Body of pancreas (tissue), 4 donors: ENCODE measurements at regions of chr2 and their contacts with region 1.

Region 1: DNA sequence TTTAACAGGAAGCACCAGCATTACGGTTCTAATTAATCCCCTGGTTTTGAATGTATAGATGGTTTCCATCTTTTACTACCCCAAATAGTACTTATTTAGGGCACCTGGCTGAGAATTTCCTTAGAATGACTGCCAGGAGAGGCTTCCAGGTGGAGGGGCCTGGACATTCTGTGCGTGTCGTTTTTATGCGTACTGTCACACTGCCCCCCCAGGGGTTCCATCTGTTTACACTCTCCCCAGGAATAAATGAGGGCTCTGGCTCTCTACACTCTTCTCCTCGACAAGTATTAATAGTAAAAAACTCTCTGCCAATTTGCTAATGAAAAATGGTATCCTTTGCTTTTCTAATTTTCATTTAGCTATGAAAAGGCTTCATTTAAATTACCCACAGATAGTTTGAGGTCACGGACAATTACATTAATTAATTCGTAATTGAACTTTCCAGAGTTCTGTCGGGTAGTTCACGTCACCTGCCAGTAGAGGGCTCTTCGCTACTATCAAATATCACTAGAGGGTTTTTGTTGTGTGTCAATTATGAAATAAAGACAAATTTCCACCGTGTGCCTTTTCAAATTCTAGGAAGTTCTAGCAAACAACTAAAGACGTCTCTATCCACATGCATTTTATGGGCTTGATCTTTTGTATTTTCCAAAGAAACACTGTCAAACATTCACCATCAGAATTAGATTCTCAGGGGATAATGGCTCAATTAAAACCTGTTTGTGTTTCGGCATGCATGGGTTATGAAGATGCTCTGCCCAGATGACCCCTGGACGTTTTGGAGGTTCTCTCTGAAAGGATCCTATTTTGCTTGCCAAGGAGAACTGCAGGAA is 88.8 kb upstream of the ASB18 start:
- DNase-seq: peak in 2 of 4 donors; percentile 27 to 38
- ATAC-seq: peak; percentile 47
- H3K4me3 ChIP-seq: no peak overlapping the region
- H3K27ac ChIP-seq: no peak overlapping the region
- H3K4me1 ChIP-seq: no peaks in the 10 kb centered on the region
- H3K27me3 ChIP-seq: no peaks in the 10 kb centered on the region
- CTCF ChIP-seq: peak; percentile 35 to 93 (median 82)
- POLR2A ChIP-seq: no peak

Region 2: GRCh38 chr2:236136538-236136937 is 216.4 kb before region 1 on chr2:
- intact Hi-C with region 1: no loop called
- DNase-seq: no peak
- ATAC-seq: no peak
- H3K4me3 ChIP-seq: no peak overlapping the region
- H3K27ac ChIP-seq: no peak overlapping the region
- H3K4me1 ChIP-seq: no peaks in the 10 kb centered on the region
- H3K27me3 ChIP-seq: no peaks in the 10 kb centered on the region
- CTCF ChIP-seq: no peak
- POLR2A ChIP-seq: no peak

Region 3: GRCh38 chr2:237026981-237027711 is 674.2 kb after region 1 on chr2:
- intact Hi-C with region 1: loop called (anchors 10 kb)
- DNase-seq: peak; percentile 71 to 78 (median 74)
- ATAC-seq: peak; percentile 80
- H3K4me3 ChIP-seq: no peak overlapping the region
- H3K27ac ChIP-seq: no peak overlapping the region
- H3K4me1 ChIP-seq: no peaks in the 10 kb centered on the region
- H3K27me3 ChIP-seq: no peaks in the 10 kb centered on the region
- CTCF ChIP-seq: peak; percentile 64 to 96 (median 86)
- POLR2A ChIP-seq: no peak

Region 4: GRCh38 chr2:237060534-237061312 is 707.7 kb after region 1 on chr2:
- intact Hi-C with region 1: loop called (anchors 5 kb)
- DNase-seq: peak; percentile 60 to 73 (median 62)
- ATAC-seq: peak; percentile 83
- H3K4me3 ChIP-seq: no peak overlapping the region
- H3K27ac ChIP-seq: no peak overlapping the region
- H3K4me1 ChIP-seq: no peaks in the 10 kb centered on the region
- H3K27me3 ChIP-seq: no peaks in the 10 kb centered on the region
- CTCF ChIP-seq: peak; percentile 48 to 82 (median 78)
- POLR2A ChIP-seq: no peak